Transverse colon (tissue), 4 donors: ENCODE measurements at regions of chr12 and their contacts with region 1.

Region 1: GRCh38 chr12:132414634-132415326 is 75.2 kb upstream of the FBRSL1 start:
- DNase-seq: peak; percentile 85
- H3K4me3 ChIP-seq: no peak overlapping the region
- H3K27ac ChIP-seq: no peak overlapping the region
- H3K4me1 ChIP-seq: peaks cover 7 to 12% (median 8%) of the 10 kb centered on the region in 4 donors
- H3K27me3 ChIP-seq: peaks cover 60% of the 10 kb centered on the region
- CTCF ChIP-seq: peak; percentile 88 to 96 (median 95)
- EP300 ChIP-seq: no peak
- POLR2A ChIP-seq: no peak

Region 2: DNA sequence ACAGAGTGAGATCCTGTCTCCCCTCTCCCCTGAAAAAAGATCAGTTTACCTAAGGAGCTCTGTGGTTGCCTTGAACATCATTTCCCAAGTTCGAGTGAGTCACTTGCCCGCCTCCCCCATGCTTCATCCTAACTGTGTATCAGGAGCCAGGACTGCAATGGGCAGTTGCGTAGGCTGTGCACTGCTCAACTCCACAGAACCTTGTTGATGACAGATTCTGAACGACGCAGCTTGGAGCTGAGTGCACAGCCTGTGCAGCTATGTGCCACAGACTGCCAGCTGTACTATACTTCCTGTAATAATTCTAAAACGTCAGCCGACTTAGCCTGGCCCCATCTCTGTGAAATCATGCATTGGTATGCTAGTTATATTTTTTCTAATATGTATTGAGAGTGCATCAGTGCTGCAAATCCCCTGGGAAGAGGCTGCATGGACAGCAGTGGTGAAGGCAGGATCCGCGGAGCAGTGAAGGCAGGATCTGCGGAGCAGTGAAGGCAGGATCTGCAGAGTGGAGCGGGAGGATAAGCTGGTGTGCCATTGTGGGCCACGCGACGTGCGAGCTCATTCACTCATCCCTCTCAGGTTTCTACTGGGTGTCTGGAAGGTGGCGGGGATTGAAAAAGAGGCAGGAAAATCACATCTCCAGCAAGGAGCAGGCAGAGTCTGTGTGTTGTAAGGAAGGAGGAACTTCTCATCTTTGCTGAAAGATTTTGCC is 166.2 kb before region 1 on chr12:
- in situ Hi-C with region 1: no loop called
- intact Hi-C with region 1: no loop called
- DNase-seq: no peak
- H3K4me3 ChIP-seq: no peak overlapping the region
- H3K27ac ChIP-seq: no peak overlapping the region
- H3K4me1 ChIP-seq: no peaks in the 10 kb centered on the region
- H3K27me3 ChIP-seq: no peaks in the 10 kb centered on the region
- CTCF ChIP-seq: no peak
- EP300 ChIP-seq: no peak
- POLR2A ChIP-seq: no peak

Region 3: DNA sequence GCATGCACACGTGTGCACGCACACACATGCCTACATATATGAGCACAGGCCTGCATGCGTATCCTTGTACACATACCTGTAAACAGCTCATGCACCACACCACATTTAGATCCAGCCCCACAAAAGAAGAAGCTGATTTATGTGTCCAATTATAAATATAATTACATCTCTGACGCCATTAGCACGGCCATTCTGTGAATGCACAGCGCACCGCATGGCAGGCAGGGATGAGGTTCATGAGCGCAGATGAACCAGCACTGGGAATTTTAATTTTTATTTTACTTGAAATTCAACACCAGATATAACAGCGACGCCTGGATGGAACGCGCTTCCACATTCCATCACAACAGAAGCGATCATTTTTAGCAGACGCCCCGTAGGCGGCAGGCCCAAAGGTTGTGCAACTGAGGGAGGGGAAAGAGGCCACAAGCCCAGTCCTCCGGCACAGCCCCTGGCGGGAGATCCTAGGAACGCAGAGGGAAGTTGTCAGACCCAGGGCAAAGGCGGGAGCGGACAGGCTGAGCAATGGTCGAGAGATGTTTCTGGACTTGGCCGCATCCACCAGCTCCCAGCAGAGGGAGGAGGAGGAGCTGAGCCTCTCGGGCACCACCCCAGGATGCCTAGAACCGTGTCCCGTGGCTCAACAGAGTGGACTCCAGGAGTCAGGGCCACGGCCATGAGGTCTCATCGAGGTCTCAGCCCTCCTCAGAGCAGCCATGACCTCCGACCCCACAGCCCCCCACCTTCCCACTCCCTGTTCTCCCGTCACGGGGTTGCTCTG is 47.5 kb before region 1 on chr12:
- in situ Hi-C with region 1: no loop called
- intact Hi-C with region 1: no loop called
- DNase-seq: no peak
- H3K4me3 ChIP-seq: no peak overlapping the region
- H3K27ac ChIP-seq: no peak overlapping the region
- H3K4me1 ChIP-seq: no peaks in the 10 kb centered on the region
- H3K27me3 ChIP-seq: peaks cover 26% of the 10 kb centered on the region
- CTCF ChIP-seq: no peak
- EP300 ChIP-seq: no peak
- POLR2A ChIP-seq: no peak

Region 4: DNA sequence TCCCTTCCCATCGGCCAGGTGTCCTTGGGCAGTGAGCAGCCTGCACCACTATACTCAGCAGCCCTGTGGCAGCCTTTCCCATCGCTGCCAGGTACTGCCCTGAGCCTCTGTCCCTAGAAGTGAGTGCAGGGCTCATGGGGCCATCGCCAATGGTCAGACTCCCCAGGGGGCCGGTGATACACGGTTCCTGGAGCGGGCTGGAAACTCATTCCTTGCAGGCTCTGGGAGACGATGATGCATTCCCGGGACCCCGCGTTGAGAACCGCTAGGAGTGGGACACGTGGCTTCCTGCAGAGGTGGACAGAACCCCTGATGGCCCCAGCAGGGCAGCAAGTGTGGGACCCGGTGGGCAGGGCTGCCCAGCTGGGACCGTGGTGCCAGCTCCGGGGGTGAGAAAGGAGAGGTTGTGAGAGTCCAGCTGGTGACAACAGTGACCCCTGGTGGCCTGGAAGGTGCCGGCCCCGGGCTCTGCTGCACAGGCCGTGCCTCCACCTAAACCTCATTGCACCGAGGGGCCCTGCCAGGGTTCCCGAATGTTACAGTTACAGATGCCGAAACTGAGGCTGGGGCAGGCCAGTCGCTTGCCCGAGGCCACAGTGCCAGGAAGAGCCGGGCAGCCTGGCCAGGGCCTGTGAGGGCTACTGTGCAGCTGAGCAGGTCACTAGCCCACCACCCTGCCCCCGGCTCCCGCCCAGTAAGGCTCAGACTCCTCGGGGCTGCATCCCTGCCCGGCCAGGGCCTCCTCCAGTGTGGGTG is 109.0 kb after region 1 on chr12:
- in situ Hi-C with region 1: loop called (anchors 25 kb)
- intact Hi-C with region 1: loop called (anchors 10 kb)
- DNase-seq: peak; percentile 73
- H3K4me3 ChIP-seq: no peak overlapping the region
- H3K27ac ChIP-seq: no peak overlapping the region
- H3K4me1 ChIP-seq: peaks cover 0 to 10% (median 9%) of the 10 kb centered on the region in 4 donors
- H3K27me3 ChIP-seq: no peaks in the 10 kb centered on the region
- CTCF ChIP-seq: peak; percentile 74 to 88 (median 79)
- EP300 ChIP-seq: no peak
- POLR2A ChIP-seq: no peak

Region 5: DNA sequence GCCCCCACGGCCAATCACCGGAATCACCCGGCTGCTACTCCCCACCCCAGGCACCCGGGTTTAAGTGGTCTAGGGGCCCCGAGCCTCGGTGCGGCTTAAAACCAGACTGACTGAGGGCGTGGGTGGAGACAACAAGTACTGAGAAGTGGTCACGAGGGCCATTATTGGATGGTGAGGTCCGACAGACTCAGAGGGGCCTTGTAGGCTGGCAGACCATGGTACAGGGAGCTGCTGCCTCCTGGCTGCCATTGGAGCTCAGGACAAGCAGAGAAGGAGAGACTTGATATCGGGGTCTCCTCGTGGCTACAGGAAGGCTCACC is 129.3 kb after region 1 on chr12:
- in situ Hi-C with region 1: loop called in 2 of 4 experiments (anchors 25 kb)
- intact Hi-C with region 1: no loop called
- DNase-seq: no peak
- H3K4me3 ChIP-seq: no peak overlapping the region
- H3K27ac ChIP-seq: no peak overlapping the region
- H3K4me1 ChIP-seq: no peaks in the 10 kb centered on the region
- H3K27me3 ChIP-seq: no peaks in the 10 kb centered on the region
- CTCF ChIP-seq: no peak
- EP300 ChIP-seq: no peak
- POLR2A ChIP-seq: no peak

Region 6: GRCh38 chr12:132614861-132615578 is 200.2 kb after region 1 on chr12:
- in situ Hi-C with region 1: loop called in 3 of 4 experiments (anchors 25 kb)
- intact Hi-C with region 1: loop called (anchors 5 kb)
- DNase-seq: peak; percentile 84
- H3K4me3 ChIP-seq: no peak overlapping the region
- H3K27ac ChIP-seq: no peak overlapping the region
- H3K4me1 ChIP-seq: peaks cover 0 to 16% (median 5%) of the 10 kb centered on the region in 4 donors
- H3K27me3 ChIP-seq: peaks cover 71% of the 10 kb centered on the region
- CTCF ChIP-seq: peak; percentile 83 to 90 (median 89)
- EP300 ChIP-seq: no peak
- POLR2A ChIP-seq: no peak

Region 7: GRCh38 chr12:132622437-132623334 is 207.9 kb after region 1 on chr12:
- in situ Hi-C with region 1: loop called in 3 of 4 experiments (anchors 25 kb)
- intact Hi-C with region 1: loop called (anchors 5 kb)
- DNase-seq: no peak
- H3K4me3 ChIP-seq: no peak overlapping the region
- H3K27ac ChIP-seq: no peak overlapping the region
- H3K4me1 ChIP-seq: peaks cover 0 to 22% (median 14%) of the 10 kb centered on the region in 4 donors
- H3K27me3 ChIP-seq: peaks cover 34% of the 10 kb centered on the region
- CTCF ChIP-seq: no peak
- EP300 ChIP-seq: no peak
- POLR2A ChIP-seq: no peak